ENCODE measurements at regions of chr17 and their contacts with region 1.

Region 1: GRCh38 chr17:29148790-29149430 is 31.3 kb downstream of the MYO18A start:
- DNase-seq: peak; percentile 94
- H3K4me3 Mint-ChIP-seq: peak overlapping the region; percentile 65
- H3K27ac Mint-ChIP-seq: peak overlapping the region; percentile 74
- H3K4me1 Mint-ChIP-seq: peaks cover 43% of the 10 kb centered on the region
- H3K27me3 Mint-ChIP-seq: no peaks in the 10 kb centered on the region

Region 2: GRCh38 chr17:29069526-29070041 is 79.3 kb before region 1 on chr17:
- CTCF ChIA-PET with region 1: no interaction called
- intact Hi-C with region 1: no loop called
- DNase-seq: no peak
- H3K4me3 Mint-ChIP-seq: no peak overlapping the region
- H3K27ac Mint-ChIP-seq: no peak overlapping the region
- H3K4me1 Mint-ChIP-seq: no peaks in the 10 kb centered on the region
- H3K27me3 Mint-ChIP-seq: no peaks in the 10 kb centered on the region

Region 3: DNA sequence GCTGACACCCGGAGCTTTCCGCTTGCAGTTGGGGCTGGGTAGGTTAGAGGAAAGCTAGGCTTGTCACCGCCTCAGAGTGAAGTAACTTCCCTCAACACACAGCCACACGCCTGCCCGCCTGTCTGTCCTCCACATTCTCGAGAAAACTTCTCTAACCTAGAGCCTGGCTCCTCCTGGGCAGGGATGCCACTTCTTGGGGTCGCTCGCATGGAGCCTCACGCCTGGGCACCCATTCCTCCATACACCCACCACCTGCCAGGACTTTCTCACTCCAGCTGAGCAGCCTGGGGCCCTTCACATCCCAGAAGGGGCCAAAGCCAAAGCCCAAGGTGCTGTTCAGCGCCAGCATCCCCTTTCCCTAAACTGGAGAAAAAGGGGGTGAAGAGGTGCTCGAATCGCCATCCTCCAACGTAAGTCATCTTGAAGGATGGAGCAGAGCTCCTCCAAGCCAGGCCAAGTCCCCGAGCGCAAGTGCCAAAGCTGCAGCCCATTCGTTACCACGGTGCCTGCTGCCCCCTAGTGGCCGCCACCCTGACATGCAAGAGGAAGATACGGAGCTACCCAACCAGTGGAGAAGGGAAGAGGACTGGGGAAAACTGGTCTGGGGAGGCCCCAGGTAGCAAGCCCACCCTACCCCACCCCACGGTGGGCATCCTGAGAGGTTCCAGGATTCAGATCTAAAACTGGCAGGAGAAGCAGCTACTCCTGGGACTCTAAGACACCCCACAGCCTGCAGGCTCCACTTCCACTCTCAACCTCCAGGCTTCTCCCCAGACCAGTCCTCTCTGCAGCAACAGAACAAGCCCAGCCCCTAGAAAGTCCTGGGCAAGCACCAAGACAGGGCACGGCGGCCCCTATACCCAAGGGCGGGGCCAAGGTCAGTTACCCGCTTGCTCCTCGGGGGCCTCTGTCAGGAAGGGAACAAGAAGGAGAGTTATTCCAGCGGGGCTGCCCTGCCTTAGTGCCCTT is 31.8 kb before region 1 on chr17:
- CTCF ChIA-PET with region 1: interaction called, 82 read pairs
- intact Hi-C with region 1: no loop called
- DNase-seq: peak; percentile 88
- H3K4me3 Mint-ChIP-seq: no peak overlapping the region
- H3K27ac Mint-ChIP-seq: no peak overlapping the region
- H3K4me1 Mint-ChIP-seq: peaks cover 9% of the 10 kb centered on the region
- H3K27me3 Mint-ChIP-seq: no peaks in the 10 kb centered on the region

Region 4: GRCh38 chr17:29133146-29133713 is 15.7 kb before region 1 on chr17:
- CTCF ChIA-PET with region 1: interaction called, 49 read pairs
- intact Hi-C with region 1: no loop called
- DNase-seq: no peak
- H3K4me3 Mint-ChIP-seq: no peak overlapping the region
- H3K27ac Mint-ChIP-seq: no peak overlapping the region
- H3K4me1 Mint-ChIP-seq: peaks cover 54% of the 10 kb centered on the region
- H3K27me3 Mint-ChIP-seq: no peaks in the 10 kb centered on the region

Region 5: GRCh38 chr17:29219378-29220047 is 70.6 kb after region 1 on chr17:
- CTCF ChIA-PET with region 1: interaction called, 154 read pairs
- intact Hi-C with region 1: loop called (anchors 1 kb)
- DNase-seq: peak; percentile 85
- H3K4me3 Mint-ChIP-seq: no peak overlapping the region
- H3K27ac Mint-ChIP-seq: no peak overlapping the region
- H3K4me1 Mint-ChIP-seq: peaks cover 4% of the 10 kb centered on the region
- H3K27me3 Mint-ChIP-seq: no peaks in the 10 kb centered on the region

Region 6: GRCh38 chr17:29293890-29294579 is 145.1 kb after region 1 on chr17 and contains the start of gene NUFIP2:
- CTCF ChIA-PET with region 1: interaction called, 30 read pairs
- intact Hi-C with region 1: loop called (anchors 1 kb)
- DNase-seq: peak; percentile 99
- H3K4me3 Mint-ChIP-seq: peak within 1 kb of the TSS; percentile 100
- H3K27ac Mint-ChIP-seq: peak within 1 kb of the TSS; percentile 99
- H3K4me1 Mint-ChIP-seq: peaks cover 25% of the 10 kb centered on the region
- H3K27me3 Mint-ChIP-seq: no peaks in the 10 kb centered on the region
- total RNA-seq, gene NUFIP2: 51.0 to 57.8 TPM

Region 7: DNA sequence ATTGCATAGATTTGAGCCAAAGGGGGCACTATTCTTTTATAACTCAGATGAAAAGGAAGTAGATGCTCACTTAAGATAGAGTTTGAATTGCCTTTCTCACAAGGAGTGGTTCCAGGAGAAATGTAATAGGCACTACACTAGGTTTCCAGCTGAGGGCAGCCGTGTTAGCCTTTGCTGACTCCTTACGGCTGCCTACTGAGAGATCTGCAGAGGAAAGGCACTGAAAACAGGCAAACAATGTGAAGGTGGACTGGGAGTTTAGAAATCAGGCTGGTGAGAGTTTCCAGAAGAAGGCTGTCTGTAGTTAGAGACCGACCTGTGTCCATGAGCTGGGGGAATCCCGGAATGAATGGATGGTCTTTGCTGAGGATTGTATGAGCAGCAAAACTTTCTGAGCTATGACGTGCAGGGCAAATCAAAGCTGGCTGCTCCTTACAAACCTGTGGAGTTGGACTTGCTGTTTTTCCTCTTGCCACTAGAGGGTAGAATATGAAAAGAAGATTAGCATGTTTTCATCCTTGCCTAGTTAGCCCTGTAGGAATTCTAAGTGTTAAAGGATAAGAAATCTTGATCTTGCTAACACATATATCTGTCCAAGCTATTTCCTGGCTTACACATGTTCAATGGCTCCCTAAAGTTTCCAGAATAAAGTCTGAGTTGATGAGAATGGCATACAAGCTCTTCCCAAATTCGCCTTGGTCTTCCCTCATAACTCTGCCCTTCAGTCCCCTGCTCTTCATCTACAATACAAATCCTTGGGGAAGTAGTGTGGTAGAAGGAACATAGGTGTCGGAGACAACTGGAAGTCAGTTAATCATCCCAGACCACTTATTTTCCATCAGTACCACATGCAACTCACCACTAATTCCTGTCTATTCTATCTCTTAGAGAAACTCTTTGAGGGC is 221.2 kb after region 1 on chr17:
- CTCF ChIA-PET with region 1: interaction called, 10 read pairs
- intact Hi-C with region 1: no loop called
- DNase-seq: peak; percentile 59
- H3K4me3 Mint-ChIP-seq: no peak overlapping the region
- H3K27ac Mint-ChIP-seq: no peak overlapping the region
- H3K4me1 Mint-ChIP-seq: no peaks in the 10 kb centered on the region
- H3K27me3 Mint-ChIP-seq: no peaks in the 10 kb centered on the region

Region 8: GRCh38 chr17:29589524-29590410 is 440.9 kb after region 1 on chr17 and contains the start of gene GIT1:
- CTCF ChIA-PET with region 1: interaction called, 4 read pairs
- intact Hi-C with region 1: loop called (anchors 5 kb)
- DNase-seq: peak; percentile 84
- H3K4me3 Mint-ChIP-seq: peak within 1 kb of the TSS; percentile 93
- H3K27ac Mint-ChIP-seq: peak within 1 kb of the TSS; percentile 88
- H3K4me1 Mint-ChIP-seq: peaks cover 70% of the 10 kb centered on the region
- H3K27me3 Mint-ChIP-seq: no peaks in the 10 kb centered on the region
- total RNA-seq, gene GIT1: 35.5 to 37.5 TPM

Measured in activated naive CD4-positive, alpha-beta T cell treated with anti-CD3 and anti-CD28 coated beads for 36 hours (primary cell).